OCI-LY7 (cell line): ENCODE measurements at regions of chr16 and their contacts with region 1.

Region 1: GRCh38 chr16:81035398-81035974 is at the start of gene ATMIN:
- DNase-seq: peak; percentile 93
- H3K4me3 ChIP-seq: peak within 1 kb of the TSS; percentile 76
- H3K27ac ChIP-seq: peak within 1 kb of the TSS; percentile 15
- H3K4me1 ChIP-seq: peaks cover 13% of the 10 kb centered on the region
- CTCF ChIP-seq: peak; percentile 95
- total RNA-seq, gene ATMIN: 13.6 and 15.0 TPM in 2 replicates

Region 2: GRCh38 chr16:80317599-80318037 is 717.9 kb before region 1 on chr16:
- CTCF ChIA-PET with region 1: no interaction called
- POLR2A ChIA-PET with region 1: no interaction called
- intact Hi-C with region 1: no loop called
- DNase-seq: no peak
- H3K4me3 ChIP-seq: no peak overlapping the region
- H3K27ac ChIP-seq: no peak overlapping the region
- H3K4me1 ChIP-seq: no peaks in the 10 kb centered on the region
- CTCF ChIP-seq: peak; percentile 44

Region 3: GRCh38 chr16:81077076-81077940 is 41.8 kb after region 1 on chr16 and contains the start of gene C16orf46:
- CTCF ChIA-PET with region 1: no interaction called
- POLR2A ChIA-PET with region 1: interaction called, 10 read pairs
- intact Hi-C with region 1: loop called (anchors 2 kb)
- DNase-seq: peak; percentile 96
- H3K4me3 ChIP-seq: peak within 1 kb of the TSS; percentile 74
- H3K27ac ChIP-seq: peak within 1 kb of the TSS; percentile 81
- H3K4me1 ChIP-seq: peaks cover 15% of the 10 kb centered on the region
- CTCF ChIP-seq: no peak
- total RNA-seq, gene C16orf46: 0.69 and 1.6 TPM in 2 replicates

Region 4: GRCh38 chr16:81095953-81096717 is 60.6 kb after region 1 on chr16 and contains the start of gene GCSH:
- CTCF ChIA-PET with region 1: no interaction called
- POLR2A ChIA-PET with region 1: interaction called, 3 read pairs
- intact Hi-C with region 1: loop called (anchors 1 kb)
- DNase-seq: peak; percentile 99
- H3K4me3 ChIP-seq: peak within 1 kb of the TSS; percentile 88
- H3K27ac ChIP-seq: no peak within 1 kb of the TSS
- H3K4me1 ChIP-seq: peaks cover 23% of the 10 kb centered on the region
- CTCF ChIP-seq: no peak
- total RNA-seq, gene GCSH: 11.7 and 23.4 TPM in 2 replicates

Region 5: DNA sequence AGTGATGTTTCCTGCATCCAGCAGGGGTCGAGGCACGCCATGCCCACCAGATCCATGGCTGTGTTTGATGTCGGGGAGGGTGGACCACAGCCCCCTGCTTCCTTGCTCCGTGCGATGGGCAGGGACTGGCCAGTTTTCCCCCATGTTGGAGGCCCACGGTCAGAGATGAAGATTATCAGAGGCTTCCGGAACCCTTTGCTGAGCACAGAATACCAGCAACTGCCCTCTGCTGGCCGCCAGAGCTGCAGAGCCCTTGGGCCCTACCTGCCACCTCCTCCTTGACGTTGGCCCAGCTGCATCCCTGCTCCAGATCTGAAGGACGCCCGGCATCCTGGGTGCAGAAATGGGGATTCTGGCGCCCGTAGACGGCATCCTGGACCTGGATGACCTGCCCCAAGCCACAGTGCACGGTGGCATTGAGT is 179.3 kb after region 1 on chr16:
- CTCF ChIA-PET with region 1: no interaction called
- POLR2A ChIA-PET with region 1: no interaction called
- intact Hi-C with region 1: loop called (anchors 10 kb)
- DNase-seq: no peak
- H3K4me3 ChIP-seq: no peak overlapping the region
- H3K27ac ChIP-seq: no peak overlapping the region
- H3K4me1 ChIP-seq: no peaks in the 10 kb centered on the region
- CTCF ChIP-seq: peak; percentile 62